GM12878 (cell line): ENCODE measurements at regions of chr6 and their contacts with region 1.

Region 1: GRCh38 chr6:35297601-35298481 is at the start of gene DEF6:
- DNase-seq: peak; percentile 72
- ATAC-seq: peak; percentile 92
- H3K4me3 ChIP-seq: peak within 1 kb of the TSS; percentile 89
- H3K27ac ChIP-seq: peak within 1 kb of the TSS; percentile 93
- H3K4me1 ChIP-seq: peaks cover 25% of the 10 kb centered on the region
- H3K27me3 ChIP-seq: no peaks in the 10 kb centered on the region
- CTCF ChIP-seq: peak; percentile 92 to 99 (median 97); a peak in 5 of 6 replicates
- EP300 ChIP-seq: peak in 1 of 2 experiments; percentile 45; a peak in 1 of 4 replicates
- POLR2A ChIP-seq: peak; percentile 82
- RAD21 ChIP-seq: peak; percentile 96
- polyA plus RNA-seq, gene DEF6: 3.3 to 5.1 TPM

Region 2: GRCh38 chr6:35264550-35265274 is 33.1 kb before region 1 on chr6:
- CTCF ChIA-PET with region 1: interaction called, 23 read pairs
- POLR2A ChIA-PET with region 1: interaction called, 3 read pairs
- RAD21 ChIA-PET with region 1: interaction called, 9 read pairs
- SMC1A ChIA-PET with region 1: interaction called, 5 read pairs
- in situ Hi-C with region 1: no loop called
- intact Hi-C with region 1: no loop called
- DNase-seq: no peak
- ATAC-seq: no peak
- H3K4me3 ChIP-seq: peak overlapping the region; percentile 48
- H3K27ac ChIP-seq: peak overlapping the region; percentile 40
- H3K4me1 ChIP-seq: peaks cover 9% of the 10 kb centered on the region
- H3K27me3 ChIP-seq: no peaks in the 10 kb centered on the region
- CTCF ChIP-seq: no peak
- EP300 ChIP-seq: no peak
- POLR2A ChIP-seq: no peak
- RAD21 ChIP-seq: no peak

Region 3: GRCh38 chr6:35327349-35328027 is 29.6 kb after region 1 on chr6:
- CTCF ChIA-PET with region 1: interaction called, 217 read pairs
- POLR2A ChIA-PET with region 1: interaction called, 7 read pairs
- RAD21 ChIA-PET with region 1: interaction called, 127 read pairs
- SMC1A ChIA-PET with region 1: interaction called, 135 read pairs
- in situ Hi-C with region 1: loop called (anchors 5 kb)
- intact Hi-C with region 1: loop called (anchors 1 kb)
- DNase-seq: no peak
- ATAC-seq: peak; percentile 99
- H3K4me3 ChIP-seq: no peak overlapping the region
- H3K27ac ChIP-seq: no peak overlapping the region
- H3K4me1 ChIP-seq: no peaks in the 10 kb centered on the region
- H3K27me3 ChIP-seq: no peaks in the 10 kb centered on the region
- CTCF ChIP-seq: peak; percentile 73 to 90 (median 86)
- EP300 ChIP-seq: no peak
- POLR2A ChIP-seq: no peak
- RAD21 ChIP-seq: peak; percentile 73

Region 4: GRCh38 chr6:35452186-35453090 is 154.6 kb after region 1 on chr6 and contains the start of gene FANCE:
- CTCF ChIA-PET with region 1: interaction called, 125 read pairs
- POLR2A ChIA-PET with region 1: interaction called, 3 read pairs
- RAD21 ChIA-PET with region 1: interaction called, 18 read pairs
- SMC1A ChIA-PET with region 1: interaction called, 78 read pairs
- in situ Hi-C with region 1: no loop called
- intact Hi-C with region 1: loop called (anchors 1 kb)
- DNase-seq: peak; percentile 72
- ATAC-seq: peak; percentile 95
- H3K4me3 ChIP-seq: peak within 1 kb of the TSS; percentile 81
- H3K27ac ChIP-seq: peak within 1 kb of the TSS; percentile 38; the same call in 1 of the 2 replicates
- H3K4me1 ChIP-seq: peaks cover 10% of the 10 kb centered on the region
- H3K27me3 ChIP-seq: 0 out of 4 replicates have a peak, but pooled peaks cover 0 to 3% of the 10 kb centered on the region in 2 experiments
- CTCF ChIP-seq: no peak
- EP300 ChIP-seq: no peak
- POLR2A ChIP-seq: peak; percentile 69
- RAD21 ChIP-seq: no peak
- polyA plus RNA-seq, gene FANCE: 3.0 to 3.7 TPM

Region 5: DNA sequence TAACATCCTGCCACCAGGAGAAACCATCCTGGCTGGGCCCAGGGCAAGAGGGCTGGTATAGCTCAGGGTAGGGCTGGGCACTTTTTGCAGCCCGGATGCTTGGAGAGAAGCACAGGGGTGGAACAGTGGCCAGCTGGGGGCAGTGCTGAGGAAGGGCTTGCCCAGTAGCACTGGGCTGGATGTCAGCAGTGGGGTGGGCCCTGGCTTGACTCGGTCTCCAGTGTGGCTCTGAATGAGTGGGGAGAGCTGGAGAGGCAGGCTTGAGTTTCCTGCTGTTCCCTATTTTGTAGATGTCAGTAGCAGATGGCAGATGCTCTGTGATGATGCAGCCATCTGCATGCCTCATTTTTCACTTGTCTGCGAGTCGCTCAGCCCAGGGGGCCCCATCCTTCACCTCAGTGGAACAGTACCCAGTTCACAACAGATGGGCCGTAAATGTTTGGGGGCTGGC is 271.2 kb after region 1 on chr6:
- CTCF ChIA-PET with region 1: no interaction called
- POLR2A ChIA-PET with region 1: no interaction called
- RAD21 ChIA-PET with region 1: no interaction called
- SMC1A ChIA-PET with region 1: no interaction called
- in situ Hi-C with region 1: no loop called
- intact Hi-C with region 1: loop called (anchors 10 kb)
- DNase-seq: no peak
- ATAC-seq: peak; percentile 87
- H3K4me3 ChIP-seq: no peak overlapping the region
- H3K27ac ChIP-seq: no peak overlapping the region
- H3K4me1 ChIP-seq: no peaks in the 10 kb centered on the region
- H3K27me3 ChIP-seq: no peaks in the 10 kb centered on the region; a peak in 1 of 4 replicates
- CTCF ChIP-seq: peak; percentile 33 to 50 (median 34); a peak in 5 of 6 replicates
- EP300 ChIP-seq: no peak
- POLR2A ChIP-seq: peak; percentile 26; the same call in 1 of the 2 replicates
- RAD21 ChIP-seq: no peak